ENCODE measurements at regions of chr10 and their contacts with region 1.

Region 1: DNA sequence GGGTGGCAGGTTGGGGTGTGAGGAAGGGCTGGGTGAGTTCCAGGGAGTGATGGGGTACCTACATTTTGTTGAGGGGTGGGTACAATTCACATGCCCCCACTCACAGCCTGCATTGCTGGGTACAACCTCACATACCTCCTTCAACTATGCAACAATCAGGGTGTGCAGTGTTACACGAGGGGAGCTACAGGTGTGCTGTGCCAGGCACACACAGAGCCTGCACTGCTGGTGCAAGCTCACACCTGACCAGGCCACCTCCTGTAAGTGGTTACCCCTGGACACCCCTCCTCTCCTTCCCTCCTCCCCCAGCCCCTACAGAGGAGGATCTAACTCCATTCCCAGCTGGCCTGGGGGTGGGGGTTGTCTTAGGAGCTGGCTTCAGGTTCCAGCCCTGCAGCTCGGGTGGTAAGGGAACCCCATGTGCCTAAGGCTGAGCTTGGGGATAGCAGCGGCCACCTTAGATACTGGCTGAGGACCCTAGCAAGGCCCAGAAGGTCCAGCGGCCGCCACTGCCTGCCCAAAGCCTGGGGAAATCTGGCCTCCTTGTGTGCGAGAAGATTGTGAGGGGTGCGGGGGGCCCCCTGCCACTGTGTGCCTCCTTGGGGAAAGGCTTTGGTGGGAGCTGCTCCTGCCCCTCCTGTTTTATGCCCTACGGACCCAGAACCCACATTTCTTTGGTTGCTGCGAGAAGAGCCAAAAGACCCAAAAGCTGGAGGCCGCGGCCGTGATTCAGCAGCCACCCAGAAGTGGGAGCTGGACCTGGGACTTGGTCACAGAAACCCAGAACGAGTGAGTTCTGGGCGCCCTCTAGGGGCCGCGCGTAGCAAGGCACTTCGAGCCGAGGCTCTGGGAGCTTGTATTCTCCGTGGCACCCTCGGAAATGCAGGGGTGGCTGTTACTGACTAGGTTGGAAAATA is 10.8 kb downstream of the TLX1 start:
- DNase-seq: peak; percentile 48
- ATAC-seq: peak; percentile 94
- H3K4me3 ChIP-seq: peak overlapping the region in 1 of 2 experiments; percentile 4; a peak in 1 of 4 replicates
- H3K27ac ChIP-seq: 0 out of 2 replicates have a peak overlapping the region, but pooled peaks have one; percentile 13
- H3K4me1 ChIP-seq: peaks cover 6% of the 10 kb centered on the region
- H3K27me3 ChIP-seq: no peaks in the 10 kb centered on the region
- CTCF ChIP-seq: peak; percentile 100

Region 2: DNA sequence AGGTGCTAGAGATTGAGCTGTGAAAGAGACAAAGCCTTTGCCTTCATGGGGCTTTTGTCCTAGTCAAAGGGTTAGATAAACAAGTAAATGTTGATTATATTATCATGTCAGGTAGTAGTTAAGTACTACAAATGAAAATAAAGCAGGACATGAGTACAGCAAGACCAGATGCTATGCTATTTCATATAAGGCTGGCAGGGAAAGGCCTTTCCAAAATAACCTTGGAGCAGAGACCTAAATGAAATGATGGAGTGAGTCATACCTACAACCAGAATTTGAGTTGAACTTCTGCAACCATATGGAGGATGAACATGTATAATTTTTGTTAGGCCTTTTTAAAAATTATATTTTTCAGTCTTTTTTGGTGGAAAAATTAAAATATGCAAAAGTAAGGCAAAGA is 196.1 kb before region 1 on chr10:
- CTCF ChIA-PET with region 1: no interaction called
- POLR2A ChIA-PET with region 1: no interaction called
- in situ Hi-C with region 1: no loop called
- intact Hi-C with region 1: no loop called
- DNase-seq: no peak
- ATAC-seq: no peak
- H3K4me3 ChIP-seq: no peak overlapping the region
- H3K27ac ChIP-seq: no peak overlapping the region
- H3K4me1 ChIP-seq: no peaks in the 10 kb centered on the region
- H3K27me3 ChIP-seq: no peaks in the 10 kb centered on the region
- CTCF ChIP-seq: no peak

Region 3: GRCh38 chr10:101050208-101051069 is 91.4 kb before region 1 on chr10:
- CTCF ChIA-PET with region 1: interaction called, 26 read pairs
- POLR2A ChIA-PET with region 1: no interaction called
- in situ Hi-C with region 1: no loop called
- intact Hi-C with region 1: loop called (anchors 10 kb)
- DNase-seq: no peak
- ATAC-seq: peak; percentile 87
- H3K4me3 ChIP-seq: peak overlapping the region; percentile 27 to 57
- H3K27ac ChIP-seq: peak overlapping the region; percentile 64; the same call in 1 of the 2 replicates
- H3K4me1 ChIP-seq: peaks cover 24% of the 10 kb centered on the region
- H3K27me3 ChIP-seq: no peaks in the 10 kb centered on the region
- CTCF ChIP-seq: peak; percentile 99

Region 4: DNA sequence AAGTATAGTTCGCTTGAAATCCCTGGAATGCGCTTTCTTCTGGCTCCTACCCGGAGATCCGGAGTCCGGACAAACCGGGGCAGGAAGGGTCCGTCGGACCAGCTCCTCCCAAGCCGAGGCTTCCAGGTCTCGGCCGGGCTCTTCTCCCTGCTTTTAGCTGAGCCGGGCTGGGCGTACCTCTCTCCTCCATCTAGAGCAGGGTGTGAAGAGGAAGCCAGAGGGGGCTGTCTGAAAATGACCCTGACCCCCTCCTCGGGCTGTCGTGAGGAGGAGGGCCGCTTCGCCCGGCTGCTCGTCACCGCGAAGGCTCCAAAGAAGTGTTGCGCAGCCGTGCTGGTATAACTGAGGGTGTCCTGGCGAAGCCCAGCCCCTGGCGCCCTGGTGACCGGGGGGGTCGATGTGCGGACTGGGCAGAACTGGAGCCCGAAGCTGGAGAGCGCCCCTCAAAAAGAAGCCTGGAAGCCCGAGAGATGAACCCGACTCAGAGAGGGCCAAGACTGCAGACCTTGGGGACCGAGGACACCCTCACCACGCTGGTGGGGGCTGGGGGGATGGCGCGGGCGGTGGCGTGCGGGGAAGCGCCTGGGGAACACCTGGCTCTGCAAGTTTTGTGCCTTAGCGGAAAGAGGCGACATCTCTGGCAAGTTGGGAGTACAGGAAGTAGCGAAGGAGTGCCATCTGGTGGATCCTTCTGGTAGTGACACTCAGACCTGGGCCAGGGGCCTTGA is 74.4 kb before region 1 on chr10:
- CTCF ChIA-PET with region 1: interaction called, 18 read pairs
- POLR2A ChIA-PET with region 1: no interaction called
- in situ Hi-C with region 1: no loop called
- intact Hi-C with region 1: no loop called
- DNase-seq: no peak
- ATAC-seq: peak; percentile 64
- H3K4me3 ChIP-seq: peak overlapping the region; percentile 64 to 94
- H3K27ac ChIP-seq: peak overlapping the region; percentile 91
- H3K4me1 ChIP-seq: peaks cover 34% of the 10 kb centered on the region
- H3K27me3 ChIP-seq: no peaks in the 10 kb centered on the region
- CTCF ChIP-seq: peak; percentile 95

Region 5: GRCh38 chr10:101095542-101096213 is 46.2 kb before region 1 on chr10:
- CTCF ChIA-PET with region 1: interaction called, 206 read pairs
- POLR2A ChIA-PET with region 1: interaction called, 6 read pairs
- in situ Hi-C with region 1: no loop called
- intact Hi-C with region 1: loop called (anchors 1 kb)
- DNase-seq: peak; percentile 50
- ATAC-seq: peak; percentile 87
- H3K4me3 ChIP-seq: no peak overlapping the region
- H3K27ac ChIP-seq: no peak overlapping the region
- H3K4me1 ChIP-seq: no peaks in the 10 kb centered on the region
- H3K27me3 ChIP-seq: no peaks in the 10 kb centered on the region
- CTCF ChIP-seq: peak; percentile 96

Region 6: DNA sequence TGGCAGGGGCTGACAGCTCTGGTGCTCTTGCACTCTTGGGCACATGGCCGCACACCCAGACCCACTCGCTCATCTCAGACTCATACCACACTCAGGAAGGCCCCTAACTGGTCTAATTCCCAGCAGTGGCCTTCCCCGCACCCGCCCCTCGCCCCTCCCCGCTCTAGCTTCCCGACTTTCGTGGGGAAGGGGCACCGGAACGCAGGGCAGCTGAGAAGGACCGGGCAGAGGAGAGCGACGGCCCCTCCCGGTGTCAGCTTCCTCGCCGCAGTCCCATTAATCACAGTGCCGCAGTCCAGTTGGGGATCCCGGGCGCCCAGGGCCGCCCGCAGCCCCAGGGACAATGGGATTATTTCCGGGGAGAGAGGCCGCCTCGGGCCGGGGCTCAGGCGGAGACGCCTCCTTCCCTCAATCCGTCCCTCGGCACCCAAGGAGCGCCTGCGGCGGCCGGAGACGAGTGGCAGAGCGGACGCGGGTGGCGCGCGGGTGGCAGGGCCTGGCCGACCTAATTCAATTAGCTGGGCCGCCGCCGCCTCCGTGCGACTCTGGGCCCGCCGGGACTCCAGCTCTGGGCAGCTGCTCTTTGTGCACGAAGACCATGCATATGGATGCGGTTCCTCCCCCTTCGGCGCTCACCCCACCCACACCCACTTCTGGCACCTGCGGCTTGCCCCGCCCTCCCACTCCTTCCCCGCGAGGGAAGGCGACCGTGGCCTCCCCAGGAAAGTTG is 18.6 kb before region 1 on chr10:
- CTCF ChIA-PET with region 1: interaction called, 13 read pairs
- POLR2A ChIA-PET with region 1: no interaction called
- in situ Hi-C with region 1: no loop called
- intact Hi-C with region 1: no loop called
- DNase-seq: no peak
- ATAC-seq: no peak
- H3K4me3 ChIP-seq: peak overlapping the region; percentile 5 to 14; a peak in 2 of 4 replicates
- H3K27ac ChIP-seq: no peak overlapping the region
- H3K4me1 ChIP-seq: no peaks in the 10 kb centered on the region; the same call in 1 of the 2 replicates
- H3K27me3 ChIP-seq: peaks cover 12% of the 10 kb centered on the region
- CTCF ChIP-seq: no peak

Measured in Panc1 (cell line).